T-cell (primary cell): ENCODE measurements at regions of chr14 and their contacts with region 1.

Region 1: DNA sequence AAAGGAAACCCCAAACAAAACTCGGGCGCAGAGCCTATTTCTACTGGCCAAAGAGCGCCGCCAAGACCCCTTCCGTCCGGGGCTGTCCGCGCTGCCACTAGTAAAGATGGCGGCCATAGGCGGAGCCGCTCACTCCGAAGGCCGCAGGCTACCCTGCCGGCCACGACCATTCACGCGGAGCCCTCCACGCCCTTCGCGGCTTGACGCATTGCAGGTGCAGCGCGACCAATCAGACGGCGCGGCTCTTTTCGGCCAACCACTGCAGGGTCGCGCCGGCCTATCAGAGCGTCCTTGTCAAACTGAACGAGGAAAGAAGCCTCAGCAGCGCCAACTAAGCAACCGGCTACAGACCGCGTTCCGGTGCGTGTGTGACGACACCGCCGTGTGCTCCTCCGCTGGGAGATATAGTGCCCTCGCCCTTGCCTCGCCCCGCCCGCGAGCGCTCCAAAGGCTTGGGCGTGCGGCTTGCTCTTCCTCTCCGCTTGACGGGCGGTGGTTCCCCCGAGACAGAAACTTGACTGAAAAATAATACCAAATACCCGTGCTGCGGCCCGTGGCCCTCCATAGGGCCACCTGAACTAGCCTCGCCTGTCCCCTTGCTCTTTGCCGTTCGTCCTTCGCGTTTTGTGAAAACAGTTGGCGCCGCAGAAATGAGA is 13.6 kb upstream of the CALM1 start:
- DNase-seq: peak; percentile 92 to 98 (median 96)
- ATAC-seq: peak; percentile 82 to 84 (median 83)
- H3K4me3 ChIP-seq: peak overlapping the region; percentile 96 to 99
- H3K4me3 Mint-ChIP-seq: no peak overlapping the region
- H3K27ac ChIP-seq: peak overlapping the region; percentile 100
- H3K27ac Mint-ChIP-seq: no peak overlapping the region
- H3K4me1 ChIP-seq: peaks cover 22 to 32% of the 10 kb centered on the region in 2 experiments
- H3K4me1 Mint-ChIP-seq: peaks cover 0 to 26% (median 21%) of the 10 kb centered on the region in 3 donors
- H3K27me3 ChIP-seq: no peaks in the 10 kb centered on the region
- H3K27me3 Mint-ChIP-seq: no peaks in the 10 kb centered on the region

Region 2: GRCh38 chr14:90331497-90332435 is 51.4 kb before region 1 on chr14 and contains the start of gene NRDE2:
- CTCF ChIA-PET with region 1: interaction called in 1 of 2 experiments, 3 read pairs
- POLR2A ChIA-PET with region 1: interaction called in 1 of 2 experiments, 10 read pairs
- DNase-seq: peak; percentile 69 to 96 (median 82)
- ATAC-seq: peak; percentile 96 to 97 (median 97)
- H3K4me3 ChIP-seq: peak within 1 kb of the TSS; percentile 66 to 83
- H3K4me3 Mint-ChIP-seq: peak within 1 kb of the TSS; percentile 91 to 92 (median 91)
- H3K27ac ChIP-seq: peak within 1 kb of the TSS; percentile 80
- H3K27ac Mint-ChIP-seq: peak within 1 kb of the TSS; percentile 90 to 91
- H3K4me1 ChIP-seq: peaks cover 2 to 17% of the 10 kb centered on the region in 2 experiments
- H3K4me1 Mint-ChIP-seq: peaks cover 30 to 35% (median 31%) of the 10 kb centered on the region in 3 donors
- H3K27me3 ChIP-seq: peaks cover 0 to 13% of the 10 kb centered on the region in 2 experiments
- H3K27me3 Mint-ChIP-seq: peaks cover 7 to 14% of the 10 kb centered on the region in 2 donors
- total RNA-seq, gene NRDE2: 20.5 to 26.7 (median 23.1) TPM

Region 3: GRCh38 chr14:90487031-90487430 is 103.8 kb after region 1 on chr14:
- CTCF ChIA-PET with region 1: no interaction called
- POLR2A ChIA-PET with region 1: no interaction called
- DNase-seq: no peak
- ATAC-seq: no peak
- H3K4me3 ChIP-seq: no peak overlapping the region
- H3K4me3 Mint-ChIP-seq: no peak overlapping the region
- H3K27ac ChIP-seq: no peak overlapping the region
- H3K27ac Mint-ChIP-seq: no peak overlapping the region
- H3K4me1 ChIP-seq: peaks cover 0 to 15% of the 10 kb centered on the region in 2 experiments
- H3K4me1 Mint-ChIP-seq: peaks cover 14 to 19% (median 15%) of the 10 kb centered on the region in 3 donors
- H3K27me3 ChIP-seq: peaks cover 0 to 12% of the 10 kb centered on the region in 2 experiments
- H3K27me3 Mint-ChIP-seq: peaks cover 0 to 6% of the 10 kb centered on the region in 2 donors

Region 4: DNA sequence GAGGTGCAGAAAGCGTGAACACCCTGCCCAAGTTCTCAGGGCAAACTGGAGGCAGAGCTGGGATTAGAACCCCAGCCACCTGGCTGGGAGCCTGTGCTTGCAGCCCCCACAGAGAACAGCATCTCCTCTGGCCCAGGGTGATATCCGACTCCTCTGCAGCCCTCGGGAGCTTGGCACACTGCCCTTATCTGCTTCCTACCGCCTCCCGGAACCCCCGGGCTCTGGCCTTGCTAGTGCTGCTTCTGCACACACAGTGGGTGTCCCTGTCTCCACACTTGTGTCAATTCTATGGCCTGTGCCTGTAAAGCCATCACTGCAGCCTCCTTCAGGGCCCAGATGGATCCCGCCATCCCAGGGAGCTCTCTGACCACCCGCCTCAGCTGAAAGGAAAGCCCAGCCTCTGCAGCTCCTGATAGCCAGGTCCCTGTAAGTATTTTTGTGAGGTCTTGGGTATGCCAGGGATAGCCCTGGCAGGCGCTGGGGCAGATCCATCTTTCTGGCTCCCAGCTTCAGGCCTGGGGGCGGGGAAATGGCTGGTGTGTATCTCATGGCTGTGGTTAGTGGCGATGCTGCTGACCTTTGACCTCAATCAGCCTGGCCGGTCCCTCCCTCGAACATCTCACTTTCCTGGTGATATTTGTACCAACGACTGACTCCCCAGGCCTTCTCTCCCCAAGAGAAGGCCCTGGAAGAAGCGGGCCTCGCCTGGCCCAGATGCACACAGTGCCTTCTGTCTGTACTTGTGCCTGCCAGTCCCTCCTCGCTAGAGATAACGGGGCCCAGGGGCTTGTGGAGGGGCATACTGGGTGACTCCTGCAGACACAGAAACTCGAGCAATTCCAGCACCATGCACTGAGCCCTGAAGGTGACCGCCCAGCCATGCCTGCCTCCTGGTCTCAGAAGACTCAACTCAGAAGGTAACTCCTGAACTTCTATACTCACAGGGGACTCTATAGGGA is 197.5 kb after region 1 on chr14:
- CTCF ChIA-PET with region 1: no interaction called
- POLR2A ChIA-PET with region 1: no interaction called
- DNase-seq: no peak
- ATAC-seq: no peak
- H3K4me3 ChIP-seq: no peak overlapping the region
- H3K4me3 Mint-ChIP-seq: no peak overlapping the region
- H3K27ac ChIP-seq: no peak overlapping the region
- H3K27ac Mint-ChIP-seq: no peak overlapping the region
- H3K4me1 ChIP-seq: no peaks in the 10 kb centered on the region
- H3K4me1 Mint-ChIP-seq: no peaks in the 10 kb centered on the region
- H3K27me3 ChIP-seq: peaks cover 0 to 4% of the 10 kb centered on the region in 2 experiments
- H3K27me3 Mint-ChIP-seq: no peaks in the 10 kb centered on the region